CD4-positive, alpha-beta T cell (primary cell): ENCODE measurements at regions of chr10 and their contacts with region 1.

Region 1: DNA sequence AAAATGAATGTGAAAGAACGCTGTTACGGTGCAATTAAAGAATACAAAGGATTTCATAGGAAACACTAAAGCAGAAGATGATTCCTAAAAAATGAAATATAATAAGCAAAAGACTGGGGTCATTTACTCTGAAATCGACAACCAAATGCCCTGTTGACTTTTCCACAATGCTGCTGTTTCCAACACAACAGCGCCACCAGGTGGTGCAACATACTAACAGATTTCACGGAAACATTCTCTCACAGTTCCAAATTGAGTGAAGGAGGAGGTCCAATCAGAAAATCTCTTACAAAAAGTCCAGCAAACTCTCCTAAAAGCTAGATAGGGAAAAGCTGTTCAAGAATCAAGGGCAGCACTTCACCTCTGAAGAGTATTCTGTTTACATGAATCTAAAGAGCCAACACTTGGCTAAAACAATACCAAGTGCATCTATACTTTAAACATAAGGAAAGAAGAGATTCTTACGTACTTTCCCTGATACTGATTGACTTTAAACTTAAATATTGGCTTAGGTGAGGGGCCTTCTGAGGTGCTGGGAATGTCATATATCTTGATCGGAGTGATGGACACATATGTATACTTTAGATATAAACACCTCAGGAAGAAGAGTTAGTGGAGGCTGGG is 55.9 kb downstream of the UPF2 start:
- DNase-seq: peak; percentile 45 to 83 (median 62)
- ATAC-seq: peak; percentile 66
- H3K4me3 ChIP-seq: no peak overlapping the region
- H3K4me3 Mint-ChIP-seq: no peak overlapping the region
- H3K27ac ChIP-seq: no peak overlapping the region
- H3K27ac Mint-ChIP-seq: no peak overlapping the region
- H3K4me1 ChIP-seq: no peaks in the 10 kb centered on the region
- H3K4me1 Mint-ChIP-seq: peaks cover 7% of the 10 kb centered on the region
- H3K27me3 ChIP-seq: no peaks in the 10 kb centered on the region
- H3K27me3 Mint-ChIP-seq: no peaks in the 10 kb centered on the region
- CTCF ChIP-seq: peak; percentile 96

Region 2: GRCh38 chr10:11141571-11142091 is 845.1 kb before region 1 on chr10:
- CTCF ChIA-PET with region 1: no interaction called
- POLR2A ChIA-PET with region 1: no interaction called
- intact Hi-C with region 1: no loop called
- DNase-seq: peak in 3 of 14 experiments; percentile 23 to 43 (median 33)
- ATAC-seq: no peak
- H3K4me3 ChIP-seq: no peak overlapping the region
- H3K4me3 Mint-ChIP-seq: peak overlapping the region; percentile 62
- H3K27ac ChIP-seq: peak overlapping the region; percentile 6 to 58
- H3K27ac Mint-ChIP-seq: peak overlapping the region; percentile 97
- H3K4me1 ChIP-seq: peaks cover 62% of the 10 kb centered on the region
- H3K4me1 Mint-ChIP-seq: peaks cover 75% of the 10 kb centered on the region
- H3K27me3 ChIP-seq: no peaks in the 10 kb centered on the region
- H3K27me3 Mint-ChIP-seq: no peaks in the 10 kb centered on the region
- CTCF ChIP-seq: no peak

Region 3: DNA sequence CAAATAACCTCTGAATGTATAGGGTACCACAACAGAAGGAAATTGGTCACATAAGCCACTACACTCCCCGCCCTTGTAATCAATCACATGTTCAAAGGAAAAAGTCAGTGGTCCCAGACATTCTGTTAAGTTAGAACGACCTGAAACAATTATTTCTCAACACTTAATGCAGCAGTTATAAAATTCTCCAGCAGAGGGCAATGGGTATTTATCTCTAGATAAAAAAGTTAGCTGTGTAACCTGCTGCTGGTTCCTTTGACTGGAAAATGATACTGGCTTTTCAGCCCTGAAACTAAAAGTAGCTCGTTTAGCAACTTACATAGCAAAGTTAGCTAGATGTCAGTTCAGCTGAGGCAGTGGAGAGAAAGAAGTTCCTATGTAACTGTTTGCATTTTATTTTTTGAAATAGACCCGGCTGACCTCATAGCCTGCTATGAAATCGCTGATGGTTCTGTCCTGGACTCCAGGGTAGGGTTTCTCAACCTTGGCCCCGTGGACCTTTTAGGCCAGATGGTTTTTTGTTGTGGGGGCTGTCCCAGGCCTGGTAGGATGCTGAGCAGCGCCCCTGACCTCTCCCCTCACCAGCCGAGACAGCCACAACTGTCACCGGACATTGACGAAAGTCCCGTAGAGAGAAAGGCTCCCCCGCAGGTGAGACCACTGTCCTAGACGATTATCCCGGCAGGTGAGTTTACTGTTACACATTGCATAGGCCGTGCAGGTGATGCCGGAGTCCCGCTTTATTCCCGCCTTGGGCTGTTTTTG is 203.7 kb before region 1 on chr10:
- CTCF ChIA-PET with region 1: interaction called, 3 read pairs
- POLR2A ChIA-PET with region 1: no interaction called
- intact Hi-C with region 1: loop called in 1 of 2 experiments (anchors 5 kb)
- DNase-seq: peak in 3 of 14 experiments; percentile 45 to 65 (median 61)
- ATAC-seq: peak; percentile 62
- H3K4me3 ChIP-seq: no peak overlapping the region
- H3K4me3 Mint-ChIP-seq: no peak overlapping the region
- H3K27ac ChIP-seq: no peak overlapping the region
- H3K27ac Mint-ChIP-seq: no peak overlapping the region
- H3K4me1 ChIP-seq: no peaks in the 10 kb centered on the region
- H3K4me1 Mint-ChIP-seq: no peaks in the 10 kb centered on the region
- H3K27me3 ChIP-seq: no peaks in the 10 kb centered on the region
- H3K27me3 Mint-ChIP-seq: no peaks in the 10 kb centered on the region
- CTCF ChIP-seq: peak; percentile 70

Region 4: DNA sequence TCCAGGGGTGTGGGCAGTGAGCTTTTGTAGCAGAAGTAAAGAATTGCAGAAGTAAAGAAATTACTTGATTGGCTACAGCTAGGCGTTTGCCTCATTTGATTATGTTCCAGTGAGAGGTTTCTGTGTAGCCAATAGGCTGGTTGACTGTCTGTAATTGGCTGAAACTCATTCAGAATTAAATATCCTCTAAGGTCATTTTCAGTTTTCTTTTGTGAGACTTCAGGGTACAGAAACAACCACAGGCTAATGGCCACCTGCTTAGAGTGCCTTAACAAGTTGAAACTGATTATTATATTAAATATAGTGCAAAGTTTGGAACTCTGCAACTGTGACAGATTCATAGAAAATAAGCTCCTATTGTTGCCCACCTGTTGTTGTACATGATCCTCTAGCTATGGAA is 153.3 kb after region 1 on chr10:
- CTCF ChIA-PET with region 1: no interaction called
- POLR2A ChIA-PET with region 1: no interaction called
- intact Hi-C with region 1: loop called in 1 of 2 experiments (anchors 5 kb)
- DNase-seq: no peak
- ATAC-seq: no peak
- H3K4me3 ChIP-seq: no peak overlapping the region
- H3K4me3 Mint-ChIP-seq: no peak overlapping the region
- H3K27ac ChIP-seq: no peak overlapping the region
- H3K27ac Mint-ChIP-seq: no peak overlapping the region
- H3K4me1 ChIP-seq: no peaks in the 10 kb centered on the region
- H3K4me1 Mint-ChIP-seq: no peaks in the 10 kb centered on the region
- H3K27me3 ChIP-seq: no peaks in the 10 kb centered on the region
- H3K27me3 Mint-ChIP-seq: no peaks in the 10 kb centered on the region
- CTCF ChIP-seq: no peak